PC-9 (cell line): ENCODE measurements at regions of chr12 and their contacts with region 1.

Region 1: GRCh38 chr12:12803186-12803585 is 10.0 kb upstream of the DDX47 start:
- DNase-seq: peak; percentile 97 to 100
- H3K4me3 ChIP-seq: peak overlapping the region; percentile 47; the same call in 1 of the 2 replicates
- H3K27ac ChIP-seq: peak overlapping the region; percentile 100
- H3K4me1 ChIP-seq: peaks cover 91% of the 10 kb centered on the region
- H3K27me3 ChIP-seq: no peaks in the 10 kb centered on the region
- CTCF ChIP-seq: no peak

Region 2: GRCh38 chr12:12056951-12057350 is 746.2 kb before region 1 on chr12:
- CTCF ChIA-PET with region 1: no interaction called
- POLR2A ChIA-PET with region 1: no interaction called
- intact Hi-C with region 1: no loop called
- DNase-seq: peak in 1 of 2 experiments; percentile 51
- H3K4me3 ChIP-seq: no peak overlapping the region
- H3K27ac ChIP-seq: no peak overlapping the region
- H3K4me1 ChIP-seq: peaks cover 11% of the 10 kb centered on the region
- H3K27me3 ChIP-seq: no peaks in the 10 kb centered on the region
- CTCF ChIP-seq: no peak

Region 3: GRCh38 chr12:12611512-12612306 is 191.5 kb before region 1 on chr12 and contains the start of gene CREBL2:
- CTCF ChIA-PET with region 1: no interaction called
- POLR2A ChIA-PET with region 1: interaction called, 11 read pairs
- intact Hi-C with region 1: no loop called
- DNase-seq: peak; percentile 91 to 93
- H3K4me3 ChIP-seq: peak within 1 kb of the TSS; percentile 89
- H3K27ac ChIP-seq: peak within 1 kb of the TSS; percentile 83
- H3K4me1 ChIP-seq: peaks cover 30% of the 10 kb centered on the region
- H3K27me3 ChIP-seq: no peaks in the 10 kb centered on the region
- CTCF ChIP-seq: no peak
- total RNA-seq, gene CREBL2: 26.6 and 30.3 TPM in 2 replicates

Region 4: GRCh38 chr12:12786716-12787601 is 16.2 kb before region 1 on chr12:
- CTCF ChIA-PET with region 1: interaction called, 8 read pairs
- POLR2A ChIA-PET with region 1: interaction called, 15 read pairs
- intact Hi-C with region 1: loop called (anchors 1 kb)
- DNase-seq: peak; percentile 57 to 83
- H3K4me3 ChIP-seq: peak overlapping the region; percentile 61; the same call in 1 of the 2 replicates
- H3K27ac ChIP-seq: peak overlapping the region; percentile 76
- H3K4me1 ChIP-seq: peaks cover 44% of the 10 kb centered on the region
- H3K27me3 ChIP-seq: no peaks in the 10 kb centered on the region
- CTCF ChIP-seq: no peak

Region 5: GRCh38 chr12:12872139-12872881 is 69.1 kb after region 1 on chr12:
- CTCF ChIA-PET with region 1: no interaction called
- POLR2A ChIA-PET with region 1: interaction called, 9 read pairs
- intact Hi-C with region 1: loop called (anchors 1 kb)
- DNase-seq: peak; percentile 96 to 100
- H3K4me3 ChIP-seq: no peak overlapping the region
- H3K27ac ChIP-seq: peak overlapping the region; percentile 97
- H3K4me1 ChIP-seq: peaks cover 65% of the 10 kb centered on the region
- H3K27me3 ChIP-seq: no peaks in the 10 kb centered on the region
- CTCF ChIP-seq: no peak

Region 6: DNA sequence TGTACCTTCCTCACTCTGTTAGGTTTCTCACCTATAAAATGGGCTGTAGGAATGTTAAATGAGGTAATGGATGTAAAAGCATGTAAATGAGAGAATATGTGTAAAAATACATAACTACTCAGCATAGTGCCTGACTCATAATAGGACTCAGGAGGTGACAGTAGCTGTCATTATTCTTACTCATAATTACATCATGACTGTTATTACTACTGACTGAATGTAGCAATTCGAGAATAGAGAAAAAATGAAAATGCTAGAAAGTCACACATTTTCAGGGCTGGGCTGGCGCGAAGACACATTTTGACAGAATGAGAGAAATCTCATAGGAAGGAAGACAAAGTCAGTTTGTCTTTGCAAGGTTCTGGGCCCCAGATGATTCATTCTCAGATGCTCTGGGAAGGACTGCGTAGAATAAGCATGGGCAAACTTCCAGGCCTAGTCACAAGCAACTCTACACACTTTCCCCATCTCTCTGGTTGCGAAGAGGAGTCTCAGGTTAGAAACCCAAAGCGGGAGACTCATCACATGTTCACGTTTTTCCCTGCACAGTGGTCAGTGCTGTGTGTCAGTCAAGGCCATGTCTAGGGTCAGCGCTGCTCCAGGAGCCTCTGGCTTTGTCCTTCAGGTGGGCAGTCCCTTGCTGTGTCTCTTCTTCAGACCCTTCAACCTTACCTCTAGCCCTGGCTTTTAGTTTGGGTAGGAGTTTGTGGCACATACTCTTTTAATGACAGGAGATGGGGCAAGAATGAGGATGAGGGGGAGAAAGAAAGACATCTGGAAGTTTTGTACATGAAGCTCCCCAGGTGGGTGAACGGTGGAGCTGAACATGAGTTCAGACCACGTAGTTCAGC is 96.6 kb after region 1 on chr12:
- CTCF ChIA-PET with region 1: no interaction called
- POLR2A ChIA-PET with region 1: interaction called, 11 read pairs
- intact Hi-C with region 1: no loop called
- DNase-seq: peak in 1 of 2 experiments; percentile 65
- H3K4me3 ChIP-seq: peak overlapping the region; percentile 17; the same call in 1 of the 2 replicates
- H3K27ac ChIP-seq: peak overlapping the region; percentile 76
- H3K4me1 ChIP-seq: peaks cover 89% of the 10 kb centered on the region
- H3K27me3 ChIP-seq: no peaks in the 10 kb centered on the region
- CTCF ChIP-seq: no peak

Region 7: DNA sequence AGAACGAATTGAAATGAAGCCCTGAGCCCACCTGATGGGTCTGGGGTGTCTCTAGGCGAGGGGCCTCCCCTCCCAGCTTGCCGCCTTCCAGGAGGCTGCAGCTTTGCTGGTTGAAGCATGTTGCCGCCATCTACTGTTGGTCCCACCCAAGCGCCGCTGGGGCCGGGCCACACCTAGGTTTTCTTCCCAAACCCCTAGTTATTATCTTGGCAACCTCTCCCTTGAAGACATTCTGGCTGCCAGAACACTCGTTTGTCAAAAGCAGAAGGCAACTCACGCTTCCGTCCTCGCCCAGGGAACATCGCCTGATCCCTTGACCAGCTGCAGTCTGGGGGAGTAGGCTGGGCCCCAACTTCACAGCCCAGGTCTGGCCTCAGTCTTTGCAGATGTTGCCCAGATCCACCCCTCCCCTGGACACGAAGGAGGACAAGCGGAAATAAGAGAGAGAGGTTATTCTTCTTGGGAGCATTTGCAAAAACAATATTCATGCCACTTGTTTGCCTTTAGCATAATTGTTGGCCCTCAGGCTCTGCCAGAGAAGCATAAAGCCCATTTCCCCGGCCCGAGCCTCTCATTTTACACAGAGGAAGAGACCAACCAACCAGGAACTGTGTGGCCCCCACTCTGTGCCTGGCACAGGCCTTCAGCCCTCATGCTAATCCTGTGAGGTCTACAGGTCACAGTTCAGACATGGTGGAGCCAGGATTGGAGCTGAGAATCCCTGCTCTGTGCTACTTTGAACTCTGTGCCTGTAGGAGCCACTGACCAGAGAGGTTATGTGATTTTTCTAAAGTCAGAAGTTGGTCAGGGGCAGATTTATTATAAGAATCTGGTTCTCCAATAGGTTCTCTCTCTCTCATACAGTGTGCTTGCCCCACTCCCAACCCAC is 400.1 kb after region 1 on chr12:
- CTCF ChIA-PET with region 1: no interaction called
- POLR2A ChIA-PET with region 1: interaction called, 14 read pairs
- intact Hi-C with region 1: loop called (anchors 5 kb)
- DNase-seq: peak in 1 of 2 experiments; percentile 83
- H3K4me3 ChIP-seq: peak overlapping the region; percentile 32; the same call in 1 of the 2 replicates
- H3K27ac ChIP-seq: peak overlapping the region; percentile 99
- H3K4me1 ChIP-seq: peaks cover 97% of the 10 kb centered on the region
- H3K27me3 ChIP-seq: no peaks in the 10 kb centered on the region
- CTCF ChIP-seq: no peak